Activated T-helper 1 cell treated with anti-CD3 and anti-CD28 coated beads, Interleukin-12 subunit alpha, Interleukin-12 subunit beta, Interleukin-2, Interleukin-4 antibody, amounts not matched to agents 30 ng/mL and 10 ng/mL and 1 ng/mL, durations not matched to agents 14 hours and 24 hours and 36 hours (primary cell): ENCODE measurements at regions of chr13 and their contacts with region 1.

Region 1: DNA sequence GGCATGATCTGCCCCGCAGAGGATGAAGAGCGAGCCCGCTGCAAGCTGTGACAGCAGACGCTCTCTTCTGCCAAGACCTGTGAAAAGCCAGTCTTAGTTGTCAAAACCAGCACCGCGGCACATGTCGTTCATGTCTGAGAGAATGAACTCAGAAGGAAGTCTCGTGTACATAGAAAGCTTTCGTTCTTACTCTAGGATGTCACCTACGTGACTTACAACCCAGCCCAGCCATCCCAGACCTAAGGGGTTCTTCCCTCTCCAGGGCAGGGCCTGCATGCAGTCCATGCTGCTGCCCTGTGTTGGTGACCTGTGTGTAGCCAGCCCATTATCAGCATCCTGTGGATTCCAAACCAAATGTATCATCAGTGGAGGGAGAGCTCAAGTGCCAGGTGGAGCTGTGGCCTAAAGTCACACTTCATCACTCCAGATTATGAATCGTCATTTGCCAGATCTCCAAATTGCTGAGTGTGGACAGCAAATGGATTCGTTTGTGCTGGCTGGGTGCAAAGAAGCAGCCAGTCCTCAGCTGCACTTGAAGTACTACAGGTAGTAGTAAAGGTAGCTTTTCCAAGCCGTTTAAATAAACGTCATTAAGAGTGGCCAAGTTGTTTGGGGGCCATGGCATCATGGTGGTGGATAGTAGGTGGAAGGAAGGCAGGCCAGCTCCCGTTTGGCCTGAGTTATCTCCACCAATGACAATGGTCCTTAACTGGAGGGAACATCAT is 73.9 kb upstream of the GPR183 start:
- DNase-seq: peak; percentile 59
- H3K4me3 Mint-ChIP-seq: peak overlapping the region; percentile 65
- H3K27ac Mint-ChIP-seq: peak overlapping the region; percentile 85
- H3K4me1 Mint-ChIP-seq: peaks cover 60% of the 10 kb centered on the region
- H3K27me3 Mint-ChIP-seq: peaks cover 2% of the 10 kb centered on the region

Region 2: DNA sequence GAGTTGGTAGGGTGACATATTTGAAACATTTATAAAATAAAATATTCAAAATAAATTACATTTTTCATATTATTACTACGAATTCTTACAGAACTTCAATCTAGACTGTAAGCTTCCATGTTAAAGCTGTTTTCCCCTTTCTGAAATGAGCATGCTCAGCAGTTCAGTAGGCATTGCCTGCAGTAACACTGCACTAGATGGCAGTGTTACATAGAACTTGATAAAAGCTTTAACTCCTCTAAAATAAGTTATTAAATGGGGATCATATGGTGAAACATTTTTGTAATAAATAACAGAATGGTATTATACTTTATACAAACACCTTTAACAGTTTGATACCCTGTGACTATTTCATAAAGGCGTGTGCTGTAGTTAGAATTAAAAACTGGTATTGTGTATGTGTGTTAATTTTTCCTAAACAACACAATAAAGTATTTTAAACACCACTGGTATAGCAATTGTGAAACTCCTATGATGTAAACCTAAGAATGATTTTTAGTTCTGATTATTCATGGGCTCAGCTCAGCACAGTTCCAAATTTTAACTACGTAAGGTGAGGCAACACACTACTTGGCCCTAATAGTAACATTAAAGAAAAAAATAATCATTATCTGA is 111.3 kb before region 1 on chr13:
- intact Hi-C with region 1: loop called (anchors 1 kb)
- DNase-seq: no peak
- H3K4me3 Mint-ChIP-seq: no peak overlapping the region
- H3K27ac Mint-ChIP-seq: no peak overlapping the region
- H3K4me1 Mint-ChIP-seq: peaks cover 55% of the 10 kb centered on the region
- H3K27me3 Mint-ChIP-seq: no peaks in the 10 kb centered on the region

Region 3: DNA sequence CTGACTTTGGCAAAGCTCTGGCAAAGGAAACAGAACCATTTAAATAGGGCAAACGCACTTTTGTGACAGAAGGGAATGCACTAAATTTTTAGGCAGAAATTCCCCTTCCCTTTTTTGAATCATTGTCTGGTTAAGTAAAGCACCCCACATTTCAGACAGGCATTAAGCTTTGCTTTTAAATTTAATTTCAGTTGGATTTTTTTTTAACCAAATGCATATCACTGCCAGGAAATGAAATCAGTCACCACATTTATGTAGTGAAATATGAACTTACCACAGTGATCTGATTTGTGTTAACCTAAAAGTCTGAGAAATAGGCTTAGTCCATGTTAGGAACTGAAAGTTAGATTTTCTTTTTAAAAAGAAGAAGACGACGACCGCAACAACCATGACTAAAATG is 84.7 kb before region 1 on chr13:
- intact Hi-C with region 1: loop called (anchors 1 kb)
- DNase-seq: no peak
- H3K4me3 Mint-ChIP-seq: peak overlapping the region; percentile 77
- H3K27ac Mint-ChIP-seq: peak overlapping the region; percentile 95
- H3K4me1 Mint-ChIP-seq: peaks cover 73% of the 10 kb centered on the region
- H3K27me3 Mint-ChIP-seq: no peaks in the 10 kb centered on the region

Region 4: GRCh38 chr13:99314640-99315176 is 66.4 kb before region 1 on chr13:
- intact Hi-C with region 1: loop called (anchors 2 kb)
- DNase-seq: peak; percentile 54
- H3K4me3 Mint-ChIP-seq: peak overlapping the region; percentile 57
- H3K27ac Mint-ChIP-seq: peak overlapping the region; percentile 96
- H3K4me1 Mint-ChIP-seq: peaks cover 80% of the 10 kb centered on the region
- H3K27me3 Mint-ChIP-seq: no peaks in the 10 kb centered on the region

Region 5: GRCh38 chr13:99356158-99357091 is 24.7 kb before region 1 on chr13:
- intact Hi-C with region 1: loop called (anchors 1 kb)
- DNase-seq: peak; percentile 74
- H3K4me3 Mint-ChIP-seq: peak overlapping the region; percentile 62
- H3K27ac Mint-ChIP-seq: peak overlapping the region; percentile 95
- H3K4me1 Mint-ChIP-seq: peaks cover 99% of the 10 kb centered on the region
- H3K27me3 Mint-ChIP-seq: peaks cover 3% of the 10 kb centered on the region

Region 6: GRCh38 chr13:99363949-99364348 is 17.1 kb before region 1 on chr13:
- intact Hi-C with region 1: loop called (anchors 1 kb)
- DNase-seq: no peak
- H3K4me3 Mint-ChIP-seq: no peak overlapping the region
- H3K27ac Mint-ChIP-seq: peak overlapping the region; percentile 11
- H3K4me1 Mint-ChIP-seq: peaks cover 84% of the 10 kb centered on the region
- H3K27me3 Mint-ChIP-seq: peaks cover 3% of the 10 kb centered on the region

Region 7: GRCh38 chr13:99606324-99607066 is 225.4 kb after region 1 on chr13:
- intact Hi-C with region 1: loop called (anchors 5 kb)
- DNase-seq: peak; percentile 82
- H3K4me3 Mint-ChIP-seq: peak within 1 kb of the TSS; percentile 89
- H3K27ac Mint-ChIP-seq: peak within 1 kb of the TSS; percentile 81
- H3K4me1 Mint-ChIP-seq: peaks cover 29% of the 10 kb centered on the region
- H3K27me3 Mint-ChIP-seq: peaks cover 4% of the 10 kb centered on the region

Region 8: DNA sequence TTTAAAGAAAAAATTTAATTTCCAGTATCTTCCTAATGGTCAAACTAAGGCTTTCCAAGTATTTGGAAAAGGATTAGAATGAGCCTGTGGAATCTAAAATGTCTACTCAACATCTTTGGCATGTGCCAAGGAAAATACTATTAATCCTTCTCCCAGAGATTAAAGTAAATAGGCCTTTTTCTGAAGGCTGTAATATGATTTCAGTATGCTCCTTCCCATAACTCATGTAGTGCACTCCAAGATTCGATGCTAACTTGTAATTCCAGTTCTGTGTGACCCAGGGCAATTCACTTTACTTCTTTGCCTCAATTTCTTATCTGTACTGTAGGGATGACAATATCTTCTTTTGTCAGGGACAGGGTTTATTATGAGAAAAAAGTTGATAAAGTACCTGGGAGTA is 393.6 kb after region 1 on chr13:
- intact Hi-C with region 1: no loop called
- DNase-seq: no peak
- H3K4me3 Mint-ChIP-seq: no peak overlapping the region
- H3K27ac Mint-ChIP-seq: no peak overlapping the region
- H3K4me1 Mint-ChIP-seq: no peaks in the 10 kb centered on the region
- H3K27me3 Mint-ChIP-seq: no peaks in the 10 kb centered on the region